Caco-2 (cell line): ENCODE measurements at regions of chr2 and their contacts with region 1.

Region 1: DNA sequence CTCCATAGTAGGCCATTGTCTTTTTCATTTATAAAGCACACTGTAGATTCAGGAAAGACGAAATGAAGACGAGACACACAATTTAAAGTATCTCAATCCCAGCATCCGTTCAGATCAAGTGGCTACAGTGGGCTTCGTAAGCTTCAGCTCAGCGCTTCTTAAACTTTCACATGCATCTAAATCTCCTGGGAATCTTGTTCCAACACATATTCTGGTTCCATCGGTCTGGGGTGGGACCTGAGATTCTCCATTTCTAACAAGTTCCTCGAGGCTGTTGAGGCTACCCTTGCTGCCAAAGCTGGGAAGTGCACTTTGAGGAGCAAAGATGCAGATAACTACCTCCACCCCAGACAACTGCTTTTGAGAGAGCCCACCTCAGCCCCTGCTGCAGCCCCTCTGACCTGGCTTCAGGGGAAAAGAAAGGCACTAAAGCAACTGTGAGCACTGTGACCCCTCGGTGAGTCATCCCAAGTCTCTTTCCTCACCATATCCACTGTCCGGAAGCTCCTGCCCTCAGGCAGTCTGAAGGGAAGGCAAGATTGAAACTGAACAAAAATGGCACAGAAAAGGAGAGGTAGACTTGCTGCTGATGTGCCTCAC is 201.1 kb upstream of the FBXO11 start:
- DNase-seq: peak; percentile 23 to 54
- H3K4me3 ChIP-seq: no peak overlapping the region
- H3K4me3 Mint-ChIP-seq: peak overlapping the region; percentile 49
- H3K27ac Mint-ChIP-seq: no peak overlapping the region
- H3K4me1 ChIP-seq: peaks cover 42% of the 10 kb centered on the region
- H3K4me1 Mint-ChIP-seq: peaks cover 8% of the 10 kb centered on the region
- H3K27me3 ChIP-seq: no peaks in the 10 kb centered on the region
- H3K27me3 Mint-ChIP-seq: peaks cover 2% of the 10 kb centered on the region
- CTCF ChIP-seq: no peak

Region 2: DNA sequence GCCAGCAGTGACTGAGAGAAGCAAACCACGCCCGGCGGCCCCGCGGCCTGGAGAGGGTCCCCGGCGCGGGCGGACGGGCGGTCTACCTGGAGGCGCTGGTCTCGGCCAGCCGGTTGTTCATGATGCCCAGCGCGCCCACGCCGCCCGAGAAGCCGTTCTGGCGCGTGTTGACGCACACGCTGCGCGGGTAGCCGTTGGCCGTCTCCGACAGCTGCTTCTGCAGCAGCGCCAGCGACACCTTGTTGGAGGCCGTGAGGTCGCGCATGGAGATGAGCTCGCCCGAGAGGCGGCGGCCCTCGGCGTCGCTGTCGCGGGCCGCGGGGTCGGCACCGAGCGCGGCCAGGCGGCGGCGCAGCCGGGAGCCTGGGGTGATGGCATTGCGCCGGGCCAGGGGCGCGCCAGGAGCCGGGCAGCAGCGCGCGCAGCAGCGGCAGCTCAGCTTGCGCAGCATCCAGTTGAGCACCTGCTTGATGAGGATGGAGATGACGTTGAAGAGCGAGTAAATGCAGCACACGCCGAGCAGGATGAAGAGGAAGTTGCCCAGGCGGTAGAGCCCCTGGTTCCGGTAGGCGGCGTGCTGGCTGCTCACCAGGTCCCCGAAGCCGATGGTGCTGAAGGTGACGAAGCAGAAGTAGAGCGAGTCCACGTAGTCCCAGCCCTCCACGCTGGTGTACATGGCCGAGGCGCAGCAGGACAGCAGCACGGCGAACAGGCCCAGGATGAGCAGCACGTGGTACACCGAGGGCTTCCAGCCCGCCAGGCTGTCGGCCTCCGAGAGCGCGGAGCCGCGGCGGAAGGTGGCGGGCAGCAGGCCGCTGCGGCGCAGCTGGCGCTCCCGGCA is 586.4 kb before region 1 on chr2:
- CTCF ChIA-PET with region 1: no interaction called
- POLR2A ChIA-PET with region 1: no interaction called
- intact Hi-C with region 1: loop called (anchors 2 kb)
- DNase-seq: peak; percentile 77 to 79
- H3K4me3 ChIP-seq: peak overlapping the region; percentile 45
- H3K4me3 Mint-ChIP-seq: peak overlapping the region; percentile 76
- H3K27ac Mint-ChIP-seq: no peak overlapping the region
- H3K4me1 ChIP-seq: no peaks in the 10 kb centered on the region
- H3K4me1 Mint-ChIP-seq: no peaks in the 10 kb centered on the region
- H3K27me3 ChIP-seq: no peaks in the 10 kb centered on the region
- H3K27me3 Mint-ChIP-seq: peaks cover 9% of the 10 kb centered on the region
- CTCF ChIP-seq: peak; percentile 50 to 55

Region 3: DNA sequence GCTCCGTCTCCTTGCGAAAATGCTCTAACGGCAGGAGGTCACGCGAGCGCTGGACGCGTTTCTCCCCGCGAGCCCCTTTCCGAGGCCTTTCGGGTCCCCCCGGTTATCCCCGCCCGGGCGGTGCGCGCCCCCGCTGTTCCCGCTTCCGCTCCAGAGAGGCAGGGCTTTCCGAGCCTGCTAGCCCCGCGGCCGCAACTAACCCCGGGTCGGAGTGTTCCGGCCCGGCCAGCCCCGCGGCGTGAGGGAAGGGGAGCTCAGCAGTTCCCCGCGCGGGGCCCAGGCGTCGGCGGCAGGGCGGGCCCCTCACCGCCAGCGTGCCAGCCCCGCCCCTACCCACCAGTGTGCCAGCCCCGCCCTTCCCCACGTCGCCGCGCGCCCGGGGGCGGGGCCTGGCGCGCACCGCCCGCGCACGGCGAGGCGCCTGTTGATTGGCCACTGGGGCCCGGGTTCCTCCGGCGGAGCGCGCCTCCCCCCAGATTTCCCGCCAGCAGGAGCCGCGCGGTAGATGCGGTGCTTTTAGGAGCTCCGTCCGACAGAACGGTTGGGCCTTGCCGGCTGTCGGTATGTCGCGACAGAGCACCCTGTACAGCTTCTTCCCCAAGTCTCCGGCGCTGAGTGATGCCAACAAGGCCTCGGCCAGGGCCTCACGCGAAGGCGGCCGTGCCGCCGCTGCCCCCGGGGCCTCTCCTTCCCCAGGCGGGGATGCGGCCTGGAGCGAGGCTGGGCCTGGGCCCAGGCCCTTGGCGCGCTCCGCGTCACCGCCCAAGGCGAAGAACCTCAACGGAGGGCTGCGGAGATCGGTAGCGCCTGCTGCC is 324.5 kb before region 1 on chr2 and contains the start of gene MSH6:
- CTCF ChIA-PET with region 1: no interaction called
- POLR2A ChIA-PET with region 1: interaction called, 3 read pairs
- intact Hi-C with region 1: loop called (anchors 10 kb)
- DNase-seq: peak; percentile 88 to 94
- H3K4me3 ChIP-seq: peak within 1 kb of the TSS; percentile 75
- H3K4me3 Mint-ChIP-seq: peak within 1 kb of the TSS; percentile 98
- H3K27ac Mint-ChIP-seq: peak within 1 kb of the TSS; percentile 99
- H3K4me1 ChIP-seq: peaks cover 4% of the 10 kb centered on the region; the same call in 1 of the 2 replicates
- H3K4me1 Mint-ChIP-seq: peaks cover 7% of the 10 kb centered on the region
- H3K27me3 ChIP-seq: no peaks in the 10 kb centered on the region
- H3K27me3 Mint-ChIP-seq: no peaks in the 10 kb centered on the region
- CTCF ChIP-seq: no peak
- total RNA-seq, gene MSH6: 93.8 and 108 TPM in 2 replicates

Region 4: DNA sequence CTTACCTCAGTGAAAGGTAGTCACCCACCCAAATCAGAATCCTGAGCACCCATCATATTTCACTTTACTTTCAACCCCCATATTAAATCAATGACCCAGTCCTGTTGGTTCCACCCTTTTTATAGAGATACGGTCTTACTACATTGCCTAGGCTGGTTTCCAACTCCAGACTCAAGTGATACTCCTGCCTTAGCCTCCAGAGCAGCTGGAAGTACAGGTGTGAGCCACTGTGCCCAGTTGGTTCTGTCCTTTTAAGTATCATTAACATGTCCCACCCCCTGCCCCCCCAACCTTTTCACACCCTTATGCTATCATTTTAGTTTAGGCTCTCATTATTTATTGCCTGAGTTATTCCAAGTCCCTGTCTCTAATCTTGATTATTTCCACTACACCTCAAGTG is 295.8 kb before region 1 on chr2:
- CTCF ChIA-PET with region 1: no interaction called
- POLR2A ChIA-PET with region 1: no interaction called
- intact Hi-C with region 1: loop called (anchors 5 kb)
- DNase-seq: no peak
- H3K4me3 ChIP-seq: no peak overlapping the region
- H3K4me3 Mint-ChIP-seq: no peak overlapping the region
- H3K27ac Mint-ChIP-seq: no peak overlapping the region
- H3K4me1 ChIP-seq: no peaks in the 10 kb centered on the region
- H3K4me1 Mint-ChIP-seq: no peaks in the 10 kb centered on the region
- H3K27me3 ChIP-seq: no peaks in the 10 kb centered on the region
- H3K27me3 Mint-ChIP-seq: no peaks in the 10 kb centered on the region
- CTCF ChIP-seq: no peak

Region 5: GRCh38 chr2:47862949-47863348 is 244.5 kb before region 1 on chr2:
- CTCF ChIA-PET with region 1: interaction called, 19 read pairs
- POLR2A ChIA-PET with region 1: no interaction called
- intact Hi-C with region 1: loop called (anchors 1 kb)
- DNase-seq: no peak
- H3K4me3 ChIP-seq: no peak overlapping the region
- H3K4me3 Mint-ChIP-seq: no peak overlapping the region
- H3K27ac Mint-ChIP-seq: no peak overlapping the region
- H3K4me1 ChIP-seq: no peaks in the 10 kb centered on the region
- H3K4me1 Mint-ChIP-seq: no peaks in the 10 kb centered on the region
- H3K27me3 ChIP-seq: no peaks in the 10 kb centered on the region
- H3K27me3 Mint-ChIP-seq: no peaks in the 10 kb centered on the region
- CTCF ChIP-seq: no peak

Region 6: GRCh38 chr2:47917276-47917961 is 190.0 kb before region 1 on chr2:
- CTCF ChIA-PET with region 1: no interaction called
- POLR2A ChIA-PET with region 1: no interaction called
- intact Hi-C with region 1: no loop called
- DNase-seq: no peak
- H3K4me3 ChIP-seq: no peak overlapping the region
- H3K4me3 Mint-ChIP-seq: no peak overlapping the region
- H3K27ac Mint-ChIP-seq: no peak overlapping the region
- H3K4me1 ChIP-seq: no peaks in the 10 kb centered on the region
- H3K4me1 Mint-ChIP-seq: no peaks in the 10 kb centered on the region
- H3K27me3 ChIP-seq: no peaks in the 10 kb centered on the region
- H3K27me3 Mint-ChIP-seq: no peaks in the 10 kb centered on the region
- CTCF ChIP-seq: no peak

Region 7: GRCh38 chr2:48080534-48081316 is 26.7 kb before region 1 on chr2:
- CTCF ChIA-PET with region 1: no interaction called
- POLR2A ChIA-PET with region 1: interaction called, 12 read pairs
- intact Hi-C with region 1: no loop called
- DNase-seq: no peak
- H3K4me3 ChIP-seq: no peak overlapping the region
- H3K4me3 Mint-ChIP-seq: no peak overlapping the region
- H3K27ac Mint-ChIP-seq: no peak overlapping the region
- H3K4me1 ChIP-seq: no peaks in the 10 kb centered on the region
- H3K4me1 Mint-ChIP-seq: peaks cover 2% of the 10 kb centered on the region
- H3K27me3 ChIP-seq: no peaks in the 10 kb centered on the region; the same call in 1 of the 2 replicates
- H3K27me3 Mint-ChIP-seq: peaks cover 3% of the 10 kb centered on the region
- CTCF ChIP-seq: no peak

Region 8: GRCh38 chr2:48180557-48180956 is 73.1 kb after region 1 on chr2:
- CTCF ChIA-PET with region 1: no interaction called
- POLR2A ChIA-PET with region 1: no interaction called
- intact Hi-C with region 1: no loop called
- DNase-seq: no peak
- H3K4me3 ChIP-seq: no peak overlapping the region
- H3K4me3 Mint-ChIP-seq: no peak overlapping the region
- H3K27ac Mint-ChIP-seq: no peak overlapping the region
- H3K4me1 ChIP-seq: no peaks in the 10 kb centered on the region
- H3K4me1 Mint-ChIP-seq: no peaks in the 10 kb centered on the region
- H3K27me3 ChIP-seq: no peaks in the 10 kb centered on the region
- H3K27me3 Mint-ChIP-seq: no peaks in the 10 kb centered on the region
- CTCF ChIP-seq: no peak